ENCODE measurements at regions of chr1 and their contacts with region 1.

Region 1: GRCh38 chr1:180515864-180516388 is 13.5 kb upstream of the ACBD6 start:
- DNase-seq: peak; percentile 66
- ATAC-seq: peak; percentile 96
- H3K4me3 Mint-ChIP-seq: no peak overlapping the region
- H3K27ac Mint-ChIP-seq: no peak overlapping the region
- H3K4me1 Mint-ChIP-seq: peaks cover 32% of the 10 kb centered on the region
- H3K27me3 Mint-ChIP-seq: no peaks in the 10 kb centered on the region; the same call in 1 of the 2 replicates
- CTCF ChIP-seq: peak; percentile 53; the same call in 1 of the 2 replicates

Region 2: DNA sequence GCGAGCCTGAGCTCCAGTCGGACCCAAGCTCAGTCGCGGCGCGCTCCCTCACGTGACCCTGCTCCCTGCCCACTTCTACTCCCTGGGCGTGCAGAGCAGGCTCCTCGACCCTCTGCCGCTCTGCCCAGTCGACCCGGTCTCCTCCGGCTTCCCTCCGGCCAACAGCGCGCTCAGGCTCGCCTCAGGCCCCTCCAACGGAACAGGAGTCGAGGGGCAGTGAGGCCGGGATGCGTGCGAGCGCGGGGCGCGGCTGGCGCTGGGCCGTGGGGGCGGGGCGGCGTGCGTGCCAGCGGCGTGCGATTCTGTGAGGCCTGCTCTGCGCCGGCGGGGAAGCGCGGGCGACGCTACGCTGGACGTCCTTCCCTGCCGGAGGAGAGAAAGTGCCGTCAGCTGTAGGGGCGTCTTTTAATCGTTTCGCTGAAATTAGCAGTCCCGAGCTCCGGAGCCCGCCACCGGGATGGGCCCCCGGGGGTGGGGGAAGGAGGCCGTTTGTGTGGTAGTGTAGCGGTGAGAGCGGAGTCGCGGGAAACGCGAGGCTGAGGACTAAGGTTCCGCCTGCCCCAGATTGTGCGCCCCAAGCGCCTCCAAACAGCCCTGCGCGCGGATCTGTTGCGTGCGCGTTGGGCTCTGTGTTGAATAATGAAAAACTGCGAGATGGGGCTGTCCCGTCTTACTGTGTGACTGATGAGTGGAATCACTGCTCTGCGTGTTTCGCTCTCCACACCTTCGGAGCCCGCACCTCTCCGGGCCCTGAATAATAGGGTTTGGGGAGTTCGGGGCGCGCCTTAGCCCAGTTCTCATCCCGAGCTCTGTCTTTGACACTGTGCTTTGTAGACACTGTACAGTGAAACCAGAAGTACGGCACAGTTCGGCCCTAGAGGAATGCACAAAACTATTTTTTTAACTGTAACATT is 13.3 kb before region 1 on chr1 and contains the start of gene ACBD6:
- CTCF ChIA-PET with region 1: interaction called, 21 read pairs
- POLR2A ChIA-PET with region 1: interaction called, 3 read pairs
- DNase-seq: peak; percentile 85
- ATAC-seq: peak; percentile 84
- H3K4me3 Mint-ChIP-seq: peak within 1 kb of the TSS; percentile 93
- H3K27ac Mint-ChIP-seq: peak within 1 kb of the TSS; percentile 98
- H3K4me1 Mint-ChIP-seq: peaks cover 24% of the 10 kb centered on the region
- H3K27me3 Mint-ChIP-seq: peaks cover 14% of the 10 kb centered on the region
- CTCF ChIP-seq: no peak
- total RNA-seq, gene ACBD6: 49.9 to 53.5 TPM (median 51.9 TPM) in 3 replicates

Region 3: DNA sequence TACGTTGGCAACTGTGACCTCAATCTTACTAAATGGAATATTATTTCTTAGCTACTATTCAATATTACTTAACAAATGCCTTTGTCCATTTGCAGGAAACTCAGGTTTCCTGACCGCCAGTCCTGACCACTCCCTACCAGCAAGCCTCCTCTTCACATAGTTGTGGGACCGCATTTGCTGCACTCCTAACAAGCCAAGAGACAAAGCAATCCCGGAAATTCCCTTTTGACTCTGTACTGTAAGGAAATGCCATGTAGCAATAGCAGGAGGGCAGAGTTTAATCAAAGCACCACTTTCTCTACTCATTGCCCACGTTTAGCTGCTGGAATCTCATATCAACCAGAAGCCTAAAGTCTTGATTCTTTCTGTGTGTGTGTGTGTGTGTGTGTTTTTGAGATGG is 14.6 kb after region 1 on chr1:
- CTCF ChIA-PET with region 1: interaction called, 11 read pairs
- POLR2A ChIA-PET with region 1: no interaction called
- DNase-seq: no peak
- ATAC-seq: peak; percentile 27; the same call in 1 of the 2 replicates
- H3K4me3 Mint-ChIP-seq: no peak overlapping the region
- H3K27ac Mint-ChIP-seq: no peak overlapping the region; the same call in 1 of the 2 replicates
- H3K4me1 Mint-ChIP-seq: peaks cover 19% of the 10 kb centered on the region
- H3K27me3 Mint-ChIP-seq: no peaks in the 10 kb centered on the region
- CTCF ChIP-seq: no peak

Region 4: DNA sequence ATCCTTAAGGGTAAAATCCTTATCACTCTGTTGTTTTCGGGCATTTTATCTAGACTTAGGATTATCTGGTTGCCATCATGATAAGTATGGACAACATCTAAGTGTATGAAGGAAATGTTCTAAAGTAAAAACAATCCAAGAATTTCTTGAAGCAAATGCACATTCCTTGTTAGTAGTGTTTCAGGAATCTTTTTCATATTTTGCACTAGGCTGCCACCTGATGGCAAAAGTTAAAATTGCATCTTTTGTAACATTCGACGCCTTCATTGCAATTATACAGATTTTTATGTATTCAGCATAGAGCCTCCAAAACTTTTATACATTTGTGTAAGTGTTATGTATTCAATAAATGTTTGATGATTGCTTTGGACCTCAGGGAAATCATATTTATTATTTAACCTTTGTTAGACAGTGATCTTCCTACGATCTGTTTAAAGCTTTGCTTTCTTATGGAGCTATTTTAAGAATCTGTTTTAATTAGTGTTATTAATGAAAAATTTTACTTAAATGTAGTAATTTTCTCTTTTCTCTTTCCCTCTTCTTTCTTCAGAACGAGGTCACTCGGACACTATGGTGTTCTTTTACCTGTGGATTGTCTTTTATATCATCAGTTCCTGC is 347.3 kb after region 1 on chr1:
- CTCF ChIA-PET with region 1: interaction called, 31 read pairs
- POLR2A ChIA-PET with region 1: no interaction called
- DNase-seq: no peak
- ATAC-seq: no peak
- H3K4me3 Mint-ChIP-seq: no peak overlapping the region
- H3K27ac Mint-ChIP-seq: no peak overlapping the region
- H3K4me1 Mint-ChIP-seq: no peaks in the 10 kb centered on the region
- H3K27me3 Mint-ChIP-seq: no peaks in the 10 kb centered on the region
- CTCF ChIP-seq: peak; percentile 45

Region 5: GRCh38 chr1:180912801-180913565 is 397.1 kb after region 1 on chr1 and contains the start of gene KIAA1614:
- CTCF ChIA-PET with region 1: interaction called, 12 read pairs
- POLR2A ChIA-PET with region 1: no interaction called
- DNase-seq: peak; percentile 58
- ATAC-seq: peak; percentile 49
- H3K4me3 Mint-ChIP-seq: peak within 1 kb of the TSS; percentile 79
- H3K27ac Mint-ChIP-seq: no peak within 1 kb of the TSS
- H3K4me1 Mint-ChIP-seq: peaks cover 39% of the 10 kb centered on the region
- H3K27me3 Mint-ChIP-seq: peaks cover 41% of the 10 kb centered on the region
- CTCF ChIP-seq: no peak
- total RNA-seq, gene KIAA1614: 1.8 to 3.3 TPM (median 2.1 TPM) in 3 replicates

Region 6: DNA sequence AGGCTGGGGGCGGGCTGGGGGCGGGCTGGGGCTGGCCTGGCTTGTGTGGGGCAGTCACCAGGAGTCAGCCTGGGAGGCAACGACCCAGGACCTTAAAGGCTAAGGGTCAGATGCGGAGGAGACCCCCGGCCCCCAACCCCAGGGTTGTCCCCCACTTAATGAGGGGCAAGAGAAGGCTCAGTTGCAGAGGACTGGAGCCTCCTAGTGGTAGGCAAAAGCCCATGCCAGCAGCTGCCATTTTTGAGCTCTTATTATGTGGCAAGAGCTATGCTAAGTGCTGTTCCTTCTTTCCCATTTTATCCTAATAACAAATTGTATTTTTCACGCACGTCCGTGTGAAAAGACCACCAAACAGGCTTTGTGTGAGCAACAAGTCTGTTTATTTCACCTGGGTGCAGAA is 404.8 kb after region 1 on chr1:
- CTCF ChIA-PET with region 1: interaction called, 11 read pairs
- POLR2A ChIA-PET with region 1: no interaction called
- DNase-seq: no peak
- ATAC-seq: no peak
- H3K4me3 Mint-ChIP-seq: no peak overlapping the region
- H3K27ac Mint-ChIP-seq: no peak overlapping the region
- H3K4me1 Mint-ChIP-seq: peaks cover 48% of the 10 kb centered on the region
- H3K27me3 Mint-ChIP-seq: peaks cover under 1% of the 10 kb centered on the region; the same call in 1 of the 2 replicates
- CTCF ChIP-seq: peak; percentile 33

Measured in WTC11 (cell line).